Breast epithelium (tissue), 4 donors: ENCODE measurements at regions of chr1 and their contacts with region 1.

Region 1: GRCh38 chr1:181189691-181190363 is 101.3 kb downstream of the IER5 start:
- DNase-seq: peak in 1 of 2 donors; percentile 50
- H3K4me3 ChIP-seq: peak overlapping the region in 2 of 3 donors; percentile 34 to 57
- H3K27ac ChIP-seq: no peak overlapping the region
- H3K4me1 ChIP-seq: no peaks in the 10 kb centered on the region
- H3K27me3 ChIP-seq: peaks cover 0 to 5% of the 10 kb centered on the region in 2 donors
- CTCF ChIP-seq: peak; percentile 51 to 88 (median 80)
- POLR2A ChIP-seq: no peak

Region 2: GRCh38 chr1:181424786-181425403 is 235.1 kb after region 1 on chr1:
- intact Hi-C with region 1: loop called (anchors 5 kb)
- DNase-seq: peak; percentile 26 to 72
- H3K4me3 ChIP-seq: peak overlapping the region in 1 of 3 donors; percentile 22
- H3K27ac ChIP-seq: no peak overlapping the region
- H3K4me1 ChIP-seq: no peaks in the 10 kb centered on the region
- H3K27me3 ChIP-seq: peaks cover 0 to 21% of the 10 kb centered on the region in 2 donors
- CTCF ChIP-seq: peak; percentile 89 to 94 (median 91)
- POLR2A ChIP-seq: no peak